HepG2 (cell line): ENCODE measurements at regions of chr2 and their contacts with region 1.

Region 1: DNA sequence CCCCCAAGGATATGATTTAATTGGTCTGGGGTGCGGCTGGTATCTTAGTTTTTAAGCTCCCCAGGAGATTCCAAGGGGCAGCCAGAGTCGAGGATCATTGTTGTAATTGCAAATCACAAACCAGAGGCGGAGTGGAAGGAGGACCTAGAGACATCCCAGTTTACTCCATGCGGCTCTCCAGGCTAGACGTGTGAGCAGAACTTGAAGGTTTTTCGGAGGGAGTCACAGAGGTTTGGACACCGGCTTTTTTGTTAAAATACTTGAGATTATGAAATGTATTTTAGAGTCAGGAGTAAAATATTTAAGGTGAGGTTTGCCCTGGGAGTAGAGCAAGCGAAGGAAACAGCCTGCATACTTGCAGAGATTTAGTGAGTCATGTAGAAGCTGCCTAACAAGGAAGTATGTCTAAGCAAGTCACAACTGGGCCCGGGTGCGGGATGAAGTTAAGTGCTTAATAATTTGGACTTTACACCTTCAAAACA is 39.5 kb downstream of the TGOLN2 start:
- DNase-seq: no peak
- ATAC-seq: no peak
- H3K4me3 ChIP-seq: no peak overlapping the region
- H3K27ac ChIP-seq: no peak overlapping the region
- H3K4me1 ChIP-seq: peaks cover 13% of the 10 kb centered on the region
- H3K27me3 ChIP-seq: peaks cover 0 to 36% of the 10 kb centered on the region in 2 experiments; a peak in 3 of 5 replicates
- CTCF ChIP-seq: no peak
- EP300 ChIP-seq: no peak
- POLR2A ChIP-seq: no peak
- RAD21 ChIP-seq: no peak

Region 2: DNA sequence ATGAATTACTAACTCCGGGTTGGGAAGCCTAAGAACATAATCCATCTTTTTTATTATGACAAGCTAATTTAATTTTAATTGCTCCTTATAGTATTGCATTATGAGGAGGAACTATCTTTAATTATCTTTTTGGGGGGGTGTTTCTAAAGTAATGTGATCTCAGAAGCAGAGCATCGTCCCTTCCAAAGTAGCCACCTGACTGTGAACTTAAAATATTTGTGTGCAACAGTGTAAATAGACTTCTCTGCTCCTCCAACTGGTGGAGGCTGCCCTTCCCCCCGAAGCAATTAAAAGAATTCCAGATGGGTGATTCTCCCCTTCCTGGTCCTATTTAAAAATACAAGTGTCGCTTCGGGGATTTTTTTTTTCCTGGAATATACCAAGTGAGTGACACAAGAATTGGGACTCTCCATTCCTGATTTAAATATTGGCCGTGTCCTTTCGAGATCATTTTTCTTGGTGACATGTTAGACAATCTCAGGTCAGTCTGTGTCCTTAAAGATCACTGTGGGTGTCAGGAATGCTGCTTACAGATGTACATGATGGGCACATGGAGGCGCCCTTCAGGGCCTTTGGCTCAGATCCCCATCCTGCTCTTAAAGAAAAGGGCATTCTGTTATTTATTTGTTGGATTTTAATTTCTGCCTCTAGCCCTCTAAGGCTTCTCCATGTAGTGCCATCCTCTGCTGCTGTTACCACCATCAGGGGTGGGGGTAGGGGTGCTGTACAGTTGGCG is 99.3 kb before region 1 on chr2:
- CTCF ChIA-PET with region 1: no interaction called
- POLR2A ChIA-PET with region 1: no interaction called
- in situ Hi-C with region 1: no loop called
- intact Hi-C with region 1: loop called (anchors 5 kb)
- DNase-seq: no peak
- ATAC-seq: no peak
- H3K4me3 ChIP-seq: no peak overlapping the region
- H3K27ac ChIP-seq: no peak overlapping the region
- H3K4me1 ChIP-seq: 0 out of 2 replicates have a peak, but pooled peaks cover 10% of the 10 kb centered on the region
- H3K27me3 ChIP-seq: peaks cover 0 to 16% of the 10 kb centered on the region in 2 experiments; a peak in 4 of 5 replicates
- CTCF ChIP-seq: no peak
- EP300 ChIP-seq: no peak
- POLR2A ChIP-seq: no peak
- RAD21 ChIP-seq: no peak

Region 3: DNA sequence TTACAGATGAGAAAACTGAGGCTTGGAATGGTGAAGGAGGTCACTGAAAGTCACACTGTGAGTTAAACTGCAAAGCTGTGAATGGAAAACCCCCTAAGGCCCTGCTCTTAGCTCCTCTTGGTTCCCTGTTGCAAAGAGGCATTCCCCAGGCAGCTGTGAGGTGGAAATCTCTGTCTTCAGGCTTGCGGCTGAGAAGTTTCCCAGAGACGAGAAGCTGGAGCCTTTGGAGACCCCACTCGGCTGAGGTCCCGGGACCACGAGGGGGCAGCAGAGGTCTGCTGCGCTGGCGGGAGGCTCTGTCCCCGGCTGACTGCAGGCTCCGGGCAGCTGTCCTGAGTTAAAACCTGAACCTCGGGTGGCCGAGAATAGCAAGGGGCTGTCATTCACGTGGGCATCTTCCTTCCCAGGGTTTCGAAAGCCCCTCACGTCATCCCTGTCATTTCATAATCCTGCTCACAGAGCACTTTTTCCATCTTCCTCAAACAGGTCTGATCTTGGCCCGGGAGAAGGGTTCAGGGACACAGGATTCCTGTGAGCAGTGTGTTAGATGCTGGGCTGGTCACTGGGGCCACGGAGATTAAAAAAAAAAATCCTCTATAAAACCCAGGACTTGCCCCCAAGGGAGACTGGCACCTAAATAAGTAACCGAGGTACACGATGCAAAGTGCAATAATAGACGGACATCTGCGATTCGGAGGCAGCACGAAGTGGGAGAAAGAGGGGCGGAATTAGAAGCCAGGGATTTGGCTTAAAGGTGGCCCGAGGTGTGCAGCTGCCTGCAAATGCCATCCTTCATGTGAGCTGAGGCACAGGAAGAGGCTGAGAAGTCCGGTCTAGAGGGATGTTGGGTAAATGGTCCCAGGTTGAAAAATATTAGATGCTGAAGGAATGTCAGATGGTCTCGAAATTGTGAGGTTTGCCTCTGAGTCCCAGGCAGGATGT is 440.9 kb after region 1 on chr2:
- CTCF ChIA-PET with region 1: no interaction called
- POLR2A ChIA-PET with region 1: no interaction called
- in situ Hi-C with region 1: no loop called
- intact Hi-C with region 1: no loop called
- DNase-seq: peak; percentile 65
- ATAC-seq: peak; percentile 98
- H3K4me3 ChIP-seq: no peak overlapping the region
- H3K27ac ChIP-seq: no peak overlapping the region
- H3K4me1 ChIP-seq: peaks cover 18% of the 10 kb centered on the region; the same call in 1 of the 2 replicates
- H3K27me3 ChIP-seq: peaks cover 5 to 32% of the 10 kb centered on the region in 2 experiments
- CTCF ChIP-seq: peak; percentile 98
- EP300 ChIP-seq: no peak
- POLR2A ChIP-seq: no peak
- RAD21 ChIP-seq: peak; percentile 98